ENCODE measurements at regions of chr3 and their contacts with region 1.

Region 1: GRCh38 chr3:169512991-169513390 is 150.5 kb downstream of the MECOM start:
- DNase-seq: no peak
- H3K4me3 Mint-ChIP-seq: no peak overlapping the region
- H3K27ac Mint-ChIP-seq: no peak overlapping the region
- H3K4me1 Mint-ChIP-seq: no peaks in the 10 kb centered on the region
- H3K27me3 Mint-ChIP-seq: no peaks in the 10 kb centered on the region
- CTCF ChIP-seq: no peak

Region 2: GRCh38 chr3:169453256-169454059 is 59.5 kb before region 1 on chr3:
- CTCF ChIA-PET with region 1: interaction called, 10 read pairs
- intact Hi-C with region 1: no loop called
- DNase-seq: no peak
- H3K4me3 Mint-ChIP-seq: no peak overlapping the region
- H3K27ac Mint-ChIP-seq: no peak overlapping the region
- H3K4me1 Mint-ChIP-seq: peaks cover 11% of the 10 kb centered on the region
- H3K27me3 Mint-ChIP-seq: no peaks in the 10 kb centered on the region
- CTCF ChIP-seq: no peak

Region 3: DNA sequence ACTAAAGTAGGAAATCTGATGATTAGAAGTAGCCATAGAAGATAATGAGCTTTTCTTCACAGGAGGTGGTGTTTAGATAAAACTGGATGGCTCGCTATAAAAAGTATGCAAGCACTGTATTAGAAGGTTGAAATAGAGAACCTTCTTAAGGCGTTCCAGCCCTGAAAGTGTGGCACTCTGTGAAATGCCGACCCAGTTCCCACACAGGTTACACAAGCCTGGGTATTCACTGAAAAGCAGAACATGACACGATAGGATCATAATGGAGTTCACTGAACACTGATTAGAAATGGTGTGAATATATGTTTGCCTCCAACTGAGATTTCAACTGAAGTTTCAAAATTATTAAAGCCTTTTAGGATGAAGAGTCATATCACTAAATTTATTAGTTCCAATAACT is 314.7 kb after region 1 on chr3:
- CTCF ChIA-PET with region 1: no interaction called
- intact Hi-C with region 1: no loop called
- DNase-seq: no peak
- H3K4me3 Mint-ChIP-seq: no peak overlapping the region
- H3K27ac Mint-ChIP-seq: no peak overlapping the region
- H3K4me1 Mint-ChIP-seq: no peaks in the 10 kb centered on the region
- H3K27me3 Mint-ChIP-seq: no peaks in the 10 kb centered on the region
- CTCF ChIP-seq: no peak

Measured in Calu3 (cell line).